Activated naive CD4-positive, alpha-beta T cell treated with anti-CD3 and anti-CD28 coated beads, Interleukin-2, amount 10 ng/mL, durations not matched to agents 7 days and 5 days (primary cell): ENCODE measurements at regions of chr14 and their contacts with region 1.

Region 1: GRCh38 chr14:24051789-24052655 is at the start of gene CARMIL3:
- DNase-seq: peak; percentile 78
- H3K4me3 Mint-ChIP-seq: peak within 1 kb of the TSS; percentile 69
- H3K27ac Mint-ChIP-seq: no peak within 1 kb of the TSS
- H3K4me1 Mint-ChIP-seq: peaks cover 16% of the 10 kb centered on the region
- H3K27me3 Mint-ChIP-seq: peaks cover 89% of the 10 kb centered on the region

Region 2: DNA sequence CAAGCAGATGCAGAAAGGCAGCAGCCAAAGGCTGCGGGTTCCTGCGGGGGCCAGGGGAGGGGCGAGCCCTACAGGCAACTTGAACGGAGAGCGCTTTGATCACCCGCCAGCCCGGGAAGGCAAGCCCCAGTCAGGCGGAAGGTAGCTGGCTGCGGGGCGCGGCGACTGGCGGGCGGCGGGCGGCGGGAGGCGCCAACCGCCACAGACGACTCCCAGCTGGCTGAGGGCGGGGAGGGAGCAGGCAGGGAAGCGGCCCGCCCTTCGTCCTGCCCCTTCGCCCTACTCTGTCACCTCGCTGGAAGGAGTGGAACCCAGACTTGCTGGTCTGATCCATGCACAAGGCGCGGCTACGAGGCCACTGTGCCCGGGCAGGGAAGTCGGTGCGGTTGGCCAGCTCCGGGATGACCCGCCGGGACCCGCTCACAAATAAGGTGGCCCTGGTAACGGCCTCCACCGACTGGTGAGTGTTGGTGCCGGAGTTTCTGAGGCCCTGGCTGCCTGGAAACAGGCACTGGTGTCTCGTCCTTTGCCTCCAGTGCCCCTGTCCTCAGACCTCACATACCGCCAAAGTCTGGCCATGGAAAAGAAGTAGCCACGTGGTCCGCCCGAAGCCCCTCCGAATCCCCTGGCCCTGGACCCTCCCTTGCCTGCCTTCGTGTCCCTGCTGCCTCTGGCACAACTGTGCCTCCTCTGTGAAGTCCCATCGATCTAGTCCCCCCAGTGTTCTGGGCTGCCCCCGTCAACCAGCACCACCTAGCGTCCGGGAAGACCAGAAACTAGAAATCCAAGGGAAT is 15.7 kb before region 1 on chr14:
- CTCF ChIA-PET with region 1: no interaction called
- DNase-seq: peak; percentile 81
- H3K4me3 Mint-ChIP-seq: peak overlapping the region; percentile 82
- H3K27ac Mint-ChIP-seq: peak overlapping the region; percentile 83
- H3K4me1 Mint-ChIP-seq: peaks cover 11% of the 10 kb centered on the region
- H3K27me3 Mint-ChIP-seq: peaks cover 18% of the 10 kb centered on the region

Region 3: GRCh38 chr14:24108336-24108874 is 56.4 kb after region 1 on chr14:
- CTCF ChIA-PET with region 1: interaction called, 184 read pairs
- DNase-seq: no peak
- H3K4me3 Mint-ChIP-seq: no peak overlapping the region
- H3K27ac Mint-ChIP-seq: peak overlapping the region; percentile 97
- H3K4me1 Mint-ChIP-seq: peaks cover 37% of the 10 kb centered on the region
- H3K27me3 Mint-ChIP-seq: no peaks in the 10 kb centered on the region